Activated CD4-positive, alpha-beta memory T cell treated with anti-CD3 and anti-CD28 coated beads for 36 hours (primary cell): ENCODE measurements at regions of chr18 and their contacts with region 1.

Region 1: DNA sequence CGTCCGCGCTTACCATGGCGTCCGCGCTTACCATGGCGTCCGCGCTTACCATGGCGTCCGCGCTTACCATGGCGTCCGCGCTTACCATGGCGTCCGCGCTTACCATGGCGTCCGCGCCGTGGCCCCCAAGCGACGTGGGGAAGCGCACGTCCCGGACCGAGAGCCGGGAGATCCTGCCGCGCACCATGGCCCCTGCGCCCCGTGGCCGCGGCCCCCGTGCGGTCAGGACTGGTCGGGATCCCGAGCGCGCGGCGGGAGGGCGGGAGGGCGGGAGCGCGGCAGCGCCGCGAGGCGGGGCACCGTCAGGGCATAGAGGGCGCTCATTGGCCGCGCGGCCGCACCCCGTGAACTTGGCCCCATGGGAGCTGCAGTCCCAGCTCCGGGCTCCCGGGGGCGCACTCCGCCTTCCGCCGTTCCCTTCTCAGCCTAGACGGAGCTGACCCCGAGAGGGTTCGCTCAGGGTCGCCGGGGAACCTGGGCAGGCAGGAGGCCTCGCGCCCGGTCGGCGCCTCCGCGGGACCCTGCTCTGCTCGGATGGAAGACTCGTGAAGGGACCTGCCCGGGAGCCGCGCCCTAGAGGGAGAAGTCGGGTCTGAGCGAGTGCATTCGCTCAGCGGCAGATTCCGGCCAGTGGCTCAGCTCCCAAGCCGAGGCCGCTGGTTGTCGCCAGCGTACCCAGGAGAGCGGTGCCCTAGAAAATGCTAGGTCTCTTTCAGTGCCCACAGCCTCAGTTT is at the start of gene ENOSF1:
- DNase-seq: peak; percentile 94
- H3K4me3 Mint-ChIP-seq: peak within 1 kb of the TSS; percentile 82
- H3K27ac Mint-ChIP-seq: peak within 1 kb of the TSS; percentile 88
- H3K4me1 Mint-ChIP-seq: peaks cover 54% of the 10 kb centered on the region
- H3K27me3 Mint-ChIP-seq: no peaks in the 10 kb centered on the region
- total RNA-seq, gene ENOSF1: 59.1 to 61.2 TPM

Region 2: GRCh38 chr18:267688-268552 is 444.6 kb before region 1 on chr18 and contains the start of gene THOC1:
- CTCF ChIA-PET with region 1: no interaction called
- POLR2A ChIA-PET with region 1: interaction called, 3 read pairs
- intact Hi-C with region 1: loop called (anchors 5 kb)
- DNase-seq: peak; percentile 98
- H3K4me3 Mint-ChIP-seq: peak within 1 kb of the TSS; percentile 99
- H3K27ac Mint-ChIP-seq: peak within 1 kb of the TSS; percentile 100
- H3K4me1 Mint-ChIP-seq: peaks cover 26% of the 10 kb centered on the region
- H3K27me3 Mint-ChIP-seq: no peaks in the 10 kb centered on the region
- total RNA-seq, gene THOC1: 54.0 to 57.9 TPM

Region 3: DNA sequence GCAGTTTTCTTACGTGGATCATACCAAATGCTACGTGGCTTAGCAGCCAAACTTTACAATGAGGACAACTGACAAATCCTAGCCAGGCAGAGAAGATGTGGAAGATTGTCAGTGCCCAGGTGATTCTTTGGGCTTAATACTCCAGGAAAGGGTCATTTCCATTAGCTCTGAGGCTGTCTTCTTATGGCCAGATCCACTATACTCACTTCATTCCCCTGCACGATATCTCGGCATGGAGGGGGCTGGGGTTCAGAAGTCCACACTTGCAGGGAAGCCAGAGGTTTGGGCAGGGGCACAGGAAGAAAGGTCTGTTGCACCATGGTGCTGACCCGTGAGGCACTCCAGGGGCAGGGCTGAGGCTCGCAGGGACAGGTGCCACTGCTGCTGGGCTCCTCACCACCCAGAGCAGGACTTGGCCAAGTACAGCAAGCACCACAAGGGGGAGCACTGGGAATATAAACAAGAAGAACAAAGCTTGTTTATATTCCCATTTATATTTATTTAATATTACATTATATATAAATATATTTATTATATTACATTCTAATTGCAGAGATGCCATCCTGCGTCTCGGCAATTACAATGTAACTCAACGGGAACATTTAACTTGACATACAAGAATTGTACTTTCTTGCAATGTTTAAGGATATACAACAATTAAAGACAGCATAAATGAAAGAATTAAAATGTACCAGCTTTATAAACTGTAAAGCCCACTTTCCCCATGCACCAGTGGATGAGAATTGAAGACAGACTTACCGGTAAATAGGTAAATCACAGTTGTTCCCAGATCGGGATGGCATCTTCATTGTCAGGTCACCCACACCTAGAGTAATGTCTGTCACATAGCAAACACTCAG is 88.6 kb before region 1 on chr18:
- CTCF ChIA-PET with region 1: interaction called, 6 read pairs
- POLR2A ChIA-PET with region 1: no interaction called
- intact Hi-C with region 1: loop called (anchors 10 kb)
- DNase-seq: peak; percentile 69
- H3K4me3 Mint-ChIP-seq: no peak overlapping the region
- H3K27ac Mint-ChIP-seq: no peak overlapping the region
- H3K4me1 Mint-ChIP-seq: no peaks in the 10 kb centered on the region
- H3K27me3 Mint-ChIP-seq: peaks cover 10% of the 10 kb centered on the region

Region 4: GRCh38 chr18:681985-682384 is 30.6 kb before region 1 on chr18:
- CTCF ChIA-PET with region 1: interaction called, 8 read pairs
- POLR2A ChIA-PET with region 1: interaction called, 3 read pairs
- intact Hi-C with region 1: loop called (anchors 1 kb)
- DNase-seq: peak; percentile 77
- H3K4me3 Mint-ChIP-seq: no peak overlapping the region
- H3K27ac Mint-ChIP-seq: peak overlapping the region; percentile 72
- H3K4me1 Mint-ChIP-seq: peaks cover 15% of the 10 kb centered on the region
- H3K27me3 Mint-ChIP-seq: no peaks in the 10 kb centered on the region

Region 5: DNA sequence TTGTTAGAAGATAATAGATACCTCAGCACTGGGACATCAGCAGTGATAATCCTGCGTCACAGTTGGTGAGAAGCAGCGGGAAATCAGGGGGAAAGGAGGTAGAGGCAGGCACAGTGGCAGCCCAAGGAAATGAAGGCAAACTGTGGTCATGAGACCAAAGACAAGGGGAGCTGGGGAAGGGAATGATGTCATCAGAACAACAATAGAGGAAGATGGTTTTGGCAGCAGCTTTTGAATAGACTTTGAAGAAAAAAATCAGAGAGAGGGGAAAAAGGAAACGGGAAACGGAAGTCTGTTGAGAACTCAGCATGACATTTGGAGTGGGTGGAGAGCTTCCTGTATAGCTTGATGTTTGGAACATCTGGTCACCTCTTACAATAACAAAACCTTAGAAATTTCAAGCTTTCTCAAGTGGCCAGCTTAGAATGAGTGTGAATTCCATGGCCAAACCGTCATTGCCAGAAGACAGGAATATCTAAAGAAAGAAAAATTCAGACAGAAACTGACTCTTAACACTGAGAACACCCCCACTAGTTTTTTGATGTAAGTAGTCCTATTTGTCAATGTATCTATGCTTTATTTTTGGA is 117.8 kb after region 1 on chr18:
- CTCF ChIA-PET with region 1: interaction called, 34 read pairs
- POLR2A ChIA-PET with region 1: interaction called, 8 read pairs
- intact Hi-C with region 1: loop called (anchors 1 kb)
- DNase-seq: peak; percentile 24
- H3K4me3 Mint-ChIP-seq: peak overlapping the region; percentile 2
- H3K27ac Mint-ChIP-seq: peak overlapping the region; percentile 44
- H3K4me1 Mint-ChIP-seq: peaks cover 19% of the 10 kb centered on the region
- H3K27me3 Mint-ChIP-seq: no peaks in the 10 kb centered on the region

Region 6: DNA sequence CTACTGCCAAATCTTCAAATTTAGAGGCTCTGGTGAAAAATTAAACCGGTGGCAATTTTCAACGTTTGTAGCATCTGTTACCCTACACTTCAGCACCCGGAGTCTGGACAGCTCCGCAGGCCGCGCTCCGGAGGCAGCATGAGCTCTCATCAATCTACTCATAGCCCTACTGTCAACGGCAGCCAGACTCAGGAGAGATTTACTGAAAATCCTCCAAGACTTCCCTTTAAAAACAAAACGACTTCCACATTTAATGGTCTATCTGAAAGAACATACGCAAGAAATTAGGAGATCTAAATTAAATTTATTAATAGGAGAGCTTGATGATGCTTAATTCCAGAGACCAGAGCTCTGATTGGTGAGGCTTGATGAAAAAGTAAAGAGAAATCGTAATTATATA is 191.1 kb after region 1 on chr18:
- CTCF ChIA-PET with region 1: no interaction called
- POLR2A ChIA-PET with region 1: no interaction called
- intact Hi-C with region 1: no loop called
- DNase-seq: peak; percentile 63
- H3K4me3 Mint-ChIP-seq: no peak overlapping the region
- H3K27ac Mint-ChIP-seq: no peak overlapping the region
- H3K4me1 Mint-ChIP-seq: peaks cover 15% of the 10 kb centered on the region
- H3K27me3 Mint-ChIP-seq: peaks cover 59% of the 10 kb centered on the region